OCI-LY7 (cell line): ENCODE measurements at regions of chr11 and their contacts with region 1.

Region 1: DNA sequence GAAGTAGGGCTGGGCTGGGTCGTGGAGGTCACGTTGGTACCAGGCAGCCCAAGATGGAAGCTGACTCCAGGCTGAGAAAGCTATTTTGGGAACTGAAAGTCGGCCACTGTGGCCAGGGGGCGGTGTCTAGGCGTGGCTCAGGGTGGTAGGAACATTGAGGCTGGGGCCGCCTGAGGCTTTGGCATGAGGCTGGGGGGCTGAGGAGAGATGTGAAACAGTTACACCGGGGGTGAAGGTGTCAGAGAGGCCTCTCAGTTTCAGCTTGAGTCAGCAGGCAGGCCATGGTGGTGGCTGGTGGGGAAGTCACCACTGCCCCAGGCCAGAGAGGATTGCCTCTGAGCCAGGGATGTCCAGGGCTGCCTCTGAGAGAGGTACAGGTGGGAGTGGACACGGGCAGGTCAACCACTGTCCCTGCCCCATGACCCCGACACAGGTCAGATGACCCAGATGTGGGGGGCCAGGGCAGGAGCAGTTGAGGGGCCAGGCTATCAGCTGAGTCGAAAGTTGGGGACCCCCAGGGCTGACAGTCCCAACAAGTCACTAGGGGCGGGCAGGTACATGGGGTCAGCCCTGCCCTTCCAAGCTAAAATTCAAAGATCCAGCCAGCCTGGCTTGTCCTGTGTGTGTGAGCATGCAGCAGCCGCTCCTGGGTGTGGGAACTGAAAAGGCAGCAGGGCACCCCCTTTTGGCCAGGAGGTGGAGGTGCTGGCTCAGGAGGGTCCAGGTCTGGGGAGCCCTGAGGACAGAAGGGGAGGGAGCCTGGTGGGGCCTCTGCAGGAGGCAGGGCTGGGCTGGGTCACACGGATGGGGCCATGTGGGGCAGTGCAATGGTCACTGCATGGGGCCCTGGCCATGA is 7.2 kb downstream of the KCNK7 start:
- DNase-seq: peak; percentile 84
- H3K4me3 ChIP-seq: peak overlapping the region; percentile 37
- H3K27ac ChIP-seq: peak overlapping the region; percentile 74
- H3K4me1 ChIP-seq: peaks cover 36% of the 10 kb centered on the region
- CTCF ChIP-seq: peak; percentile 83

Region 2: DNA sequence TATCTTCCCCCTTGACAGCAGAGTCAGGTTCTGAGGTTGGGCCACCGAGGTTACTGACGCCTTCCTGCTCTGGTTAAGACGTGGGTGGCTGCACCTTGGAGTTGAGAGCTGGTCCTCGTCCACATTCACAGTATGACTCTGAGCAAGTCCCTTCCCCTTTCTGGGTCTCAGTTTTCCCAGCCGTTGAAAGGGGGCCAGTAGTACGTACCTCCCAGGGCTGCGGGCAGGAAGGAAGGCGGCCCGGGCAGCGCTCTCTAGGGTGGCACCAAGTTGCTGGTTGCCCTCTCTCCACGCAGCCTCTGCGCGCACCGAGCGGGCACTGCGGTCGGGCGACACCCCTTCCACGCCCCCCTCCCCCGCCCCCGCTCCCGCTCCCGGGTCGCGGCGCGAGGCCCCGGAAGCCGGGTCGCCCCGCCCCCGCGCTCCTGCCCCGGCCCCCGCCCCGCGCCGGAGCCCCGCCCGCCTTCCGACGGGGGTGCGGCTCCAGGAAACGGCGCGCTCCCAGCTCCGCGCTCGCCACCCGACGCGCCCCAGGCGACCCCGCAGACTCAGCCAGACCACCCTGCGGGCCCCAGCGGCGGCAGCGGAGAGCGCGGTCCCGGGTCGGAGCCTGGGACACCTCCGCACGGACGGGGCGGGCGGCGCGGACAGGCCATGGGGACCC is 12.7 kb before region 1 on chr11 and contains the start of gene EHBP1L1:
- CTCF ChIA-PET with region 1: interaction called, 11 read pairs
- POLR2A ChIA-PET with region 1: interaction called, 17 read pairs
- intact Hi-C with region 1: loop called (anchors 1 kb)
- DNase-seq: peak; percentile 83
- H3K4me3 ChIP-seq: peak within 1 kb of the TSS; percentile 94
- H3K27ac ChIP-seq: peak within 1 kb of the TSS; percentile 84
- H3K4me1 ChIP-seq: peaks cover 55% of the 10 kb centered on the region
- CTCF ChIP-seq: no peak
- total RNA-seq, gene EHBP1L1: 59.6 and 59.7 TPM in 2 replicates